ENCODE measurements at regions of chr1 and their contacts with region 1.

Region 1: DNA sequence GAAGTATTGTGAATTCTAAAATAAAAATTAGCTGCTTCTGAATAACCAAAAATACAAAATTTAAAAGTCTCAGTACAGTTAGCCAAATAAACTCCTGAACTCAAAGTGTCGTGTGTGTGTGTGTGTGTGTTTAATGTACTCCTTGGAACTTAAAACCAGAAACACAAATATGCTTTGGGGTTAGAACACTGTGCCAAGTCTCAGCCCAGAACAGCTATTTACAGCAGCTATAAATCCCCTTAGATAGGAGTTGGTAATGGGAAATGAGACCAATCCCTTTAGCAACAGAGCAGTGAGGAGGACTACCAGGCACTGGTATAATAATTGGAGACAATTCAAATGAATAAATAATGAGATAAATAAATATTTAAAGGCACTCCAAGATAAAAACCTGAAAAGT is 83.1 kb downstream of the PATJ start:
- DNase-seq: no peak
- ATAC-seq: no peak
- H3K4me3 ChIP-seq: no peak overlapping the region
- H3K27ac ChIP-seq: no peak overlapping the region
- H3K4me1 ChIP-seq: no peaks in the 10 kb centered on the region
- H3K27me3 ChIP-seq: no peaks in the 10 kb centered on the region
- CTCF ChIP-seq: no peak
- EP300 ChIP-seq: no peak
- POLR2A ChIP-seq: no peak
- RAD21 ChIP-seq: no peak

Region 2: GRCh38 chr1:61797045-61797755 is 28.2 kb before region 1 on chr1:
- CTCF ChIA-PET with region 1: no interaction called
- POLR2A ChIA-PET with region 1: no interaction called
- RAD21 ChIA-PET with region 1: no interaction called
- SMC1A ChIA-PET with region 1: interaction called, 3 read pairs
- in situ Hi-C with region 1: no loop called
- intact Hi-C with region 1: loop called (anchors 1 kb)
- DNase-seq: no peak
- ATAC-seq: no peak
- H3K4me3 ChIP-seq: no peak overlapping the region
- H3K27ac ChIP-seq: no peak overlapping the region
- H3K4me1 ChIP-seq: no peaks in the 10 kb centered on the region
- H3K27me3 ChIP-seq: no peaks in the 10 kb centered on the region
- CTCF ChIP-seq: no peak
- EP300 ChIP-seq: no peak
- POLR2A ChIP-seq: no peak
- RAD21 ChIP-seq: no peak